ENCODE measurements at regions of chr1 and their contacts with region 1.

Region 1: GRCh38 chr1:51235673-51236530 is at the start of gene RNF11:
- DNase-seq: peak; percentile 89 to 97 (median 93)
- ATAC-seq: peak; percentile 98
- H3K4me3 ChIP-seq: peak within 1 kb of the TSS; percentile 68
- H3K4me3 Mint-ChIP-seq: peak within 1 kb of the TSS in 9 of 10 donors; percentile 90 to 99 (median 94)
- H3K27ac ChIP-seq: peak within 1 kb of the TSS; percentile 90
- H3K27ac Mint-ChIP-seq: peak within 1 kb of the TSS; percentile 91 to 100 (median 96)
- H3K4me1 ChIP-seq: peaks cover 18 to 34% of the 10 kb centered on the region in 2 donors
- H3K4me1 Mint-ChIP-seq: peaks cover 15 to 36% (median 30%) of the 10 kb centered on the region in 7 donors
- H3K27me3 ChIP-seq: no peaks in the 10 kb centered on the region
- H3K27me3 Mint-ChIP-seq: peaks cover 0 to 4% (median 0%) of the 10 kb centered on the region in 5 donors
- total RNA-seq, gene RNF11: 23.3 to 64.0 (median 42.9) TPM

Region 2: DNA sequence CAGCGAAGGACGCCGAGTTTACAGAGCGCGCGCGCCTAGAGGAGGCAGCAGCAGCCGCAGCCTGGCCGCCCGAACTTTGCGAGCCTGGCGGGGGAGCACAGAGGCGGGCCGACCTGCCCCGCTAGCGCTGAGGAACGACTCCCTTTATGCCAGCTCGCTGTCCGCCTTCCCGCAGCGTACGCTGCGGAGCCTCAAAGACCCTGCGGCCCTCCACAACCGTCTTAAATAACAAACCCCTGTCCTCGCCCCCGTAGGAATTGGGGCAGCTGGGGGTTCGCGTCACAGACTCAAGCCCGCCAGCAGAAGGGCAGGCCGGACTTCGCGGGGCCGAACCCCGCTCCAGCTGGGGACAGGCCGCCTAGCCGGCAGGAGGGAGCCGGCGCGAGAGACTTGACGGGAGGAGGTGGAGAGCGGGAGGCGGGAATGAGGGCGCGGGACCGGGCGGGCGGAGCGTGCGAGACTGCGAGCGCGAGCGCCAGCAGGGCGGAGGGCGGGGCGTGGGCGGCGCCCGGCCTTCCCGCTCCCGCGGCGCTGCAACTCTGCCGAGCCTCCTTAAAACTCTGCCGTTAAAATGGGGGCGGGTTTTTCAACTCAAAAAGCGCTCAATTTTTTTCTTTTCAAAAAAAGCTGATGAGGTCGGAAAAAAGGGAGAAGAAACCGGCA is 267.6 kb before region 1 on chr1:
- CTCF ChIA-PET with region 1: no interaction called
- POLR2A ChIA-PET with region 1: interaction called, 4 read pairs
- intact Hi-C with region 1: loop called (anchors 1 to 2 kb)
- DNase-seq: peak; percentile 67 to 86 (median 85)
- ATAC-seq: peak; percentile 89
- H3K4me3 ChIP-seq: peak overlapping the region; percentile 83
- H3K4me3 Mint-ChIP-seq: peak overlapping the region; percentile 92 to 99 (median 98)
- H3K27ac ChIP-seq: peak overlapping the region; percentile 96
- H3K27ac Mint-ChIP-seq: peak overlapping the region; percentile 71 to 100 (median 91)
- H3K4me1 ChIP-seq: peaks cover 6 to 15% of the 10 kb centered on the region in 2 donors
- H3K4me1 Mint-ChIP-seq: peaks cover 18 to 29% (median 26%) of the 10 kb centered on the region in 7 donors
- H3K27me3 ChIP-seq: no peaks in the 10 kb centered on the region
- H3K27me3 Mint-ChIP-seq: peaks cover 0 to 12% (median 2%) of the 10 kb centered on the region in 5 donors

Region 3: GRCh38 chr1:51214615-51215131 is 21.2 kb before region 1 on chr1:
- CTCF ChIA-PET with region 1: no interaction called
- POLR2A ChIA-PET with region 1: interaction called, 6 read pairs
- intact Hi-C with region 1: loop called in 1 of 2 experiments (anchors 2 kb)
- DNase-seq: peak in 2 of 9 donors; percentile 11 to 13
- ATAC-seq: peak; percentile 77
- H3K4me3 ChIP-seq: no peak overlapping the region
- H3K4me3 Mint-ChIP-seq: peak overlapping the region in 7 of 10 donors; percentile 4 to 52 (median 35)
- H3K27ac ChIP-seq: peak overlapping the region; percentile 48
- H3K27ac Mint-ChIP-seq: peak overlapping the region; percentile 6 to 78 (median 66)
- H3K4me1 ChIP-seq: peaks cover 0 to 8% of the 10 kb centered on the region in 2 donors
- H3K4me1 Mint-ChIP-seq: peaks cover 18 to 23% (median 20%) of the 10 kb centered on the region in 7 donors
- H3K27me3 ChIP-seq: no peaks in the 10 kb centered on the region
- H3K27me3 Mint-ChIP-seq: no peaks in the 10 kb centered on the region

Region 4: GRCh38 chr1:51296383-51297357 is 60.8 kb after region 1 on chr1:
- CTCF ChIA-PET with region 1: interaction called, 3 read pairs
- POLR2A ChIA-PET with region 1: no interaction called
- intact Hi-C with region 1: loop called (anchors 1 kb)
- DNase-seq: peak; percentile 25 to 82 (median 53)
- ATAC-seq: peak; percentile 86
- H3K4me3 ChIP-seq: peak overlapping the region; percentile 59
- H3K4me3 Mint-ChIP-seq: peak overlapping the region; percentile 30 to 82 (median 70)
- H3K27ac ChIP-seq: no peak overlapping the region
- H3K27ac Mint-ChIP-seq: peak overlapping the region in 2 of 9 donors; percentile 63 to 72
- H3K4me1 ChIP-seq: no peaks in the 10 kb centered on the region
- H3K4me1 Mint-ChIP-seq: peaks cover 0 to 28% (median 9%) of the 10 kb centered on the region in 7 donors
- H3K27me3 ChIP-seq: no peaks in the 10 kb centered on the region
- H3K27me3 Mint-ChIP-seq: no peaks in the 10 kb centered on the region

Region 5: GRCh38 chr1:51616901-51617708 is 381.2 kb after region 1 on chr1 and contains the start of gene OSBPL9:
- CTCF ChIA-PET with region 1: no interaction called
- POLR2A ChIA-PET with region 1: interaction called, 3 read pairs
- intact Hi-C with region 1: loop called (anchors 2 to 5 kb)
- DNase-seq: peak; percentile 69 to 89 (median 84)
- ATAC-seq: peak; percentile 98
- H3K4me3 ChIP-seq: peak within 1 kb of the TSS; percentile 95
- H3K4me3 Mint-ChIP-seq: peak within 1 kb of the TSS; percentile 98 to 100 (median 99)
- H3K27ac ChIP-seq: peak within 1 kb of the TSS; percentile 86
- H3K27ac Mint-ChIP-seq: peak within 1 kb of the TSS; percentile 94 to 100 (median 99)
- H3K4me1 ChIP-seq: peaks cover 6 to 15% of the 10 kb centered on the region in 2 donors
- H3K4me1 Mint-ChIP-seq: peaks cover 22 to 60% (median 48%) of the 10 kb centered on the region in 7 donors
- H3K27me3 ChIP-seq: no peaks in the 10 kb centered on the region
- H3K27me3 Mint-ChIP-seq: peaks cover 0 to 6% (median 3%) of the 10 kb centered on the region in 5 donors
- total RNA-seq, gene OSBPL9: 44.5 to 56.9 (median 46.6) TPM